ENCODE measurements at regions of chr13 and their contacts with region 1.

Region 1: DNA sequence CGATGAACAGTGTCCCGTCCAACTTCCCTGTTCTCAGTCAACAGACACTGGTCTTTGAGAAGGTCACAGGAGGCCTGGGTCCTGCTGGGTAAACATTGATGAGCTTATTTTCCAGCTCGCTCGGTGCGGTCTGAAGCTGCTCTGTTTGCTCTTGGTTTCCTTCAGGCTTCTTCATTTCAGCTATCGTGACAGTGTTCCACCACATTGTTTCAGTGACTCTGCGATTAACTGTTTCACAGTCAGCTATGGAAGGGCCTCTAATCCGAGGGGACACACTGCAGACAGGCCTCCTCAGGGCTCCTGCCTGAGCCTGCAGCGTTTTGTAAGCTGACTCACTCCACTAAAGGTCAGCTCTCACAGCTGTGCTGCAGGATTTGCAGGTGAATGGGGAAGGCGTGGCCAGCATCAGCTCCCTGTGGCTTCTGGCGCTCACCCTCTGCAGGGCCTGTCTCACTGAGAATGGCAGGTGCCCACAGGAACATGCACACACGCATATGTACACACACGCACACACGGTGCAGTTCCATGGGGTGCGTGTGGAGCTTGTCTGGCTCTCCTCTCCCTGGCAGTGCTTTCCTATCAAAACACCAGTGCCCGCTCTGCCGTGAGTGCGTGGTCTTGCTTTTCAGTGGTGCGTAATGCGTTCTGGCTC is 62.9 kb upstream of the MCF2L start:
- DNase-seq: peak; percentile 59 to 67
- H3K4me3 ChIP-seq: peak overlapping the region in 1 of 4 experiments; percentile 24; a peak in 2 of 8 replicates
- H3K27ac ChIP-seq: peak overlapping the region; percentile 72; the same call in 1 of the 2 replicates
- H3K4me1 ChIP-seq: peaks cover 14 to 48% (median 27%) of the 10 kb centered on the region in 4 experiments
- H3K27me3 ChIP-seq: no peaks in the 10 kb centered on the region
- CTCF ChIP-seq: no peak
- EP300 ChIP-seq: peak in 1 of 2 experiments; percentile 86; a peak in 1 of 3 replicates
- POLR2A ChIP-seq: peak in 1 of 2 experiments; percentile 68; a peak in 2 of 3 replicates
- RAD21 ChIP-seq: no peak

Region 2: GRCh38 chr13:112893570-112894422 is 12.3 kb before region 1 on chr13:
- CTCF ChIA-PET with region 1: interaction called, 12 read pairs
- POLR2A ChIA-PET with region 1: interaction called, 44 read pairs
- DNase-seq: peak; percentile 36 to 80
- H3K4me3 ChIP-seq: peak overlapping the region; percentile 13 to 71 (median 40); a peak in 6 of 8 replicates
- H3K27ac ChIP-seq: peak overlapping the region; percentile 73; the same call in 1 of the 2 replicates
- H3K4me1 ChIP-seq: peaks cover 7 to 50% (median 41%) of the 10 kb centered on the region in 4 experiments
- H3K27me3 ChIP-seq: peaks cover 0 to 16% (median 13%) of the 10 kb centered on the region in 4 experiments; a peak in 6 of 7 replicates
- CTCF ChIP-seq: no peak
- EP300 ChIP-seq: no peak
- POLR2A ChIP-seq: peak in 1 of 2 experiments; percentile 20; a peak in 1 of 3 replicates
- RAD21 ChIP-seq: peak in 1 of 2 experiments; percentile 13; a peak in 1 of 4 replicates

Region 3: DNA sequence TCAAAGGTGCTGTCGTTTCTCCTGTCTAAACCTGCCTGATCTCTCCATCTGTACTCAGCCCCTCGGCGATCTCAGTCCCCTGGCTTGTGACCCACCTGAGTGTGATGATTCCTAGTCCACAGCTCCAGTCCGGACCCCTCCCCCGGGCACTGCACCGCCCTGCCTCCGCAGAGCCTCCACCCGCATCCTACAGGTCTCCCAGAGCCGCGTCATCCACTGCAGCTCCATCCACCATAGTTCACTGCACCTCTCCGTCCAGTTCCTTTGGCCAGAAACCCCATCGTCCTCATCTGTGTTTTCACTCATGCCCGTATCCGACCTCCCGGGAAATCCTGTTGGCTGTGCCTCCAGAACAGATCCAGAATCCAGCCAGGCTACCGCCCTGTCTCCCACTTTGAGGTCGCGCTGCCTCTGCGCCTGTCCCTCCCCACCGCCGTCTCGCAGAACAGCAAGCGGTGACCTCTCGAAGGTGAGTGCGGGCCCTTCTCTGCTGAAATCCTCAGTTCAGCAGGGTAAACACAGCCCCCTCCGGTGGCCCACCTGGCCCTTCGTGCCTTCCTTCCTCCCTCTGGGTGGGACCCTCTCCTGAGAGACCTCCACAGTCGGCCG is 11.0 kb after region 1 on chr13:
- CTCF ChIA-PET with region 1: interaction called, 8 read pairs
- POLR2A ChIA-PET with region 1: interaction called, 10 read pairs
- DNase-seq: no peak
- H3K4me3 ChIP-seq: no peak overlapping the region
- H3K27ac ChIP-seq: no peak overlapping the region
- H3K4me1 ChIP-seq: peaks cover 0 to 4% (median 2%) of the 10 kb centered on the region in 4 experiments; a peak in 6 of 7 replicates
- H3K27me3 ChIP-seq: no peaks in the 10 kb centered on the region
- CTCF ChIP-seq: no peak
- EP300 ChIP-seq: no peak
- POLR2A ChIP-seq: no peak
- RAD21 ChIP-seq: 0 out of 4 replicates have a peak, but pooled peaks of 1 of the 2 experiments have one; percentile 12

Region 4: DNA sequence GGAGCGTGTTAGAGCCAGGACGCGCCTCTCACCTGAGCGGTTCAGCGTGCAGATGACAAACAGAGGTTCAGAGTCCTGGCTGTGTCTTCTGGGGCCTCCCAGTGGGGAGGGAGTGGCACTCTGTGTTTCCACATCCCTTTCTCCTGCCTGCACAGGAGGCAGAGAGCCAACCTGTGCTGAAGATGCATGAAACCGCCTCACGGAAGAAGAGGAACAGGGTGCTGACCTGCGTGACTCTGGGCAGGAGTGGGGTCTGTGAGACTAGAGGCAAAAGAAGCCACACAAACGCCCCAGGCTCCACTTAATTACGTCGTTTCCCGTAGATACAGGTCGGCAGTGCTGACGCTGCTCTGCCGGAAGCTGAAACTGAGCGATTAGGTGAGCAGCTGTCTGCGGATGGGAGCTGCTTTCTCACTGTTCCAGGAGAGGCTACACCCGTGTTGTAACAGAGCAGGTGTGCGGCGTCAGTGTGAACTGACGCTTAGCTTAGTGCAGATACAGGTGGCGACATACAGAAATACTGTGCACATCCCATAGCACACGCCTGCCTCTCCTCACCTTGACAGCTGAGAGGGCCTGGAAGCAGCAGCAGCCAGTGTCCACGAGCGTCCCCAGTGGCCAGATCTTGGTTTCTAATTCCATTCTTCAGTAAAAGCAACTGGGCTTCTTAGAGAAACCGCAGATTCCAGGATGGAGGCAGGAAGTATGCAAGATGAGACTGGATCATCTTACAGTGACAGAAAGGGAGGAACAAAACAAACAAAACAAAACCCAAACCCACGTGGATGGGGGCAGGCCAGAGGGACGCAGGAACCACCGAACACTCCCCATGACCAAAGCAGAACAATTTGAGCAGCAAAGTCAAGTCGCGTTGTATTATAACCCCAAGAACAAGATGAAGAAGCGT is 25.2 kb after region 1 on chr13:
- CTCF ChIA-PET with region 1: interaction called, 12 read pairs
- POLR2A ChIA-PET with region 1: interaction called, 4 read pairs
- DNase-seq: peak in 1 of 2 experiments; percentile 13
- H3K4me3 ChIP-seq: no peak overlapping the region
- H3K27ac ChIP-seq: no peak overlapping the region
- H3K4me1 ChIP-seq: peaks cover 0 to 17% (median 8%) of the 10 kb centered on the region in 4 experiments; a peak in 4 of 7 replicates
- H3K27me3 ChIP-seq: no peaks in the 10 kb centered on the region
- CTCF ChIP-seq: peak; percentile 69 to 83 (median 70)
- EP300 ChIP-seq: no peak
- POLR2A ChIP-seq: no peak
- RAD21 ChIP-seq: peak; percentile 51 to 66

Region 5: GRCh38 chr13:113040597-113041292 is 134.6 kb after region 1 on chr13:
- CTCF ChIA-PET with region 1: no interaction called
- POLR2A ChIA-PET with region 1: no interaction called
- DNase-seq: no peak
- H3K4me3 ChIP-seq: no peak overlapping the region
- H3K27ac ChIP-seq: no peak overlapping the region
- H3K4me1 ChIP-seq: no peaks in the 10 kb centered on the region
- H3K27me3 ChIP-seq: no peaks in the 10 kb centered on the region
- CTCF ChIP-seq: no peak
- EP300 ChIP-seq: no peak
- POLR2A ChIP-seq: no peak
- RAD21 ChIP-seq: no peak